ENCODE measurements at regions of chr16 and their contacts with region 1.

Region 1: GRCh38 chr16:10964039-10964890 is 19.9 kb downstream of the CLEC16A start:
- DNase-seq: peak; percentile 86
- ATAC-seq: peak; percentile 70
- H3K4me3 Mint-ChIP-seq: peak overlapping the region; percentile 42
- H3K27ac Mint-ChIP-seq: peak overlapping the region; percentile 83
- H3K4me1 Mint-ChIP-seq: peaks cover 69% of the 10 kb centered on the region
- H3K27me3 Mint-ChIP-seq: no peaks in the 10 kb centered on the region

Region 2: GRCh38 chr16:10944249-10945064 is 19.8 kb before region 1 on chr16 and contains the start of gene CLEC16A:
- CTCF ChIA-PET with region 1: interaction called, 124 read pairs
- POLR2A ChIA-PET with region 1: interaction called, 3 read pairs
- DNase-seq: peak; percentile 96
- ATAC-seq: peak; percentile 72
- H3K4me3 Mint-ChIP-seq: peak within 1 kb of the TSS; percentile 79
- H3K27ac Mint-ChIP-seq: peak within 1 kb of the TSS; percentile 66
- H3K4me1 Mint-ChIP-seq: peaks cover 67% of the 10 kb centered on the region
- H3K27me3 Mint-ChIP-seq: no peaks in the 10 kb centered on the region
- total RNA-seq, gene CLEC16A: 32.8 to 38.5 TPM

Region 3: DNA sequence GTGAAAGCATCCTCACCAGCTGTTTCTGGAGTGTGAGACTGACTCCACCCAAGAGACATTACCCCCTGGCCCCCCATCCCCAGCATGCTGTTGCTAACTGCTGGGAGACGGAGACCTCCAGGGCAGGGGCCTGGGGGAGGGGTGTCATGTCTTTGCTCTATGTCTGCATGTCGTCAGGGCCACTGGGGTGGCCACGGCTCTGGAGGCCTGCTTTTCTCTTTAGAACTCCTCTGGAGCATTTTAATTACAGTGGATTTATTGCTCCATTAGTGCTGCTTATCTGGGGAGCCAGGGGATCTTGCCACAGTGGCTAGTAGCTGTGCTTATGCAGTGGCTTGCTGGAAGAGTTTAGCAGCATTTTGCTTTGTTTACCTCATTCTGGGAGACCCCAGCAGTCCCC is 12.4 kb after region 1 on chr16:
- CTCF ChIA-PET with region 1: interaction called, 38 read pairs
- POLR2A ChIA-PET with region 1: no interaction called
- DNase-seq: no peak
- ATAC-seq: no peak
- H3K4me3 Mint-ChIP-seq: no peak overlapping the region
- H3K27ac Mint-ChIP-seq: no peak overlapping the region
- H3K4me1 Mint-ChIP-seq: peaks cover 81% of the 10 kb centered on the region
- H3K27me3 Mint-ChIP-seq: no peaks in the 10 kb centered on the region

Region 4: GRCh38 chr16:11224096-11224893 is 260.0 kb after region 1 on chr16:
- CTCF ChIA-PET with region 1: interaction called, 17 read pairs
- POLR2A ChIA-PET with region 1: no interaction called
- DNase-seq: peak; percentile 90
- ATAC-seq: peak; percentile 77
- H3K4me3 Mint-ChIP-seq: peak overlapping the region; percentile 80
- H3K27ac Mint-ChIP-seq: peak overlapping the region; percentile 99
- H3K4me1 Mint-ChIP-seq: peaks cover 82% of the 10 kb centered on the region
- H3K27me3 Mint-ChIP-seq: no peaks in the 10 kb centered on the region

Region 5: GRCh38 chr16:11356573-11357331 is 392.5 kb after region 1 on chr16:
- CTCF ChIA-PET with region 1: interaction called, 24 read pairs
- POLR2A ChIA-PET with region 1: no interaction called
- DNase-seq: peak; percentile 68
- ATAC-seq: no peak
- H3K4me3 Mint-ChIP-seq: peak overlapping the region; percentile 76
- H3K27ac Mint-ChIP-seq: peak overlapping the region; percentile 65
- H3K4me1 Mint-ChIP-seq: peaks cover 91% of the 10 kb centered on the region
- H3K27me3 Mint-ChIP-seq: peaks cover 5% of the 10 kb centered on the region

Region 6: DNA sequence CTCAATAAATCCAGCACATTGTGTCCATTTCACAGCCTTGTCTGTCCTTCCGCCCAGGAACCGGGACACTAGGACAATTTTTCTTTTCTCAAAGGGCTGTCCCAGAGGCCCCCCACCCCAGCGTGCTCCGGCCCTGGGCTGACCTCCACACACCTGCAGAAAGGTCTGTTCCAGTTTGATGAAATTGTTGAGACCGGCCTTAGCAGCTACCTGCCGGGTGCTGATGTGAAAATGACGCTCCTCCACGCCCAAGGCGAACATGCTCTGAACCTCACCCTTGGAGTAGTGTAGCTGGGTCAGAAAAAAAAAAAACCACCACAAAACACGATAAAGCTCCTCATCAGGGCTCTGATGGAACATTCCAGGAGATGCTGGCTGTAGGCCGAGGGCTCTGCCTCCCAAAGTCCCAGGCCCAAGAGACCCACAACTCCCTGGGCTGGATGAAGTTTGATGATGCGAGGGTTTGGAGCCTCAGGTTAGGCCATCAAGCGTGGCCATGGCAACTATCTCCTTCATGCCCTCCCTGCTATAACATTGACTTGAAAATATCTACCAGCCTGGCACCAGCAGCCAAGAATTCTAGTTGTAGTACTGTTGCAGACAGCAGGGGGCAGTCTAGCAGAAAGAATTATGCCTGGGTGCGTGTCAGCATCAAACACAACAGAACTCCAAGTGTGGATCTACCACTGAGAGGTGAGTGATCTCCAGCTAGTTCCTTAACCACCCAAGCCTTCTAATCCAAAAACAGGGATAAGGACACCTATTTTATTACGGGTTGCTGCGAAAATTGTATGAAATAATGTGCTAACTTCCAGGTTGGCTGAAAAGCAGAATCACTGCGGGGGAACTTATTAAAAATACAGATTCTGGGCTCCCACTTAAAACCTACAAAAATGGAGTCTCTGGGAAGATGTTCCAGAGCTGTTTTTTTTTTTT is 443.1 kb after region 1 on chr16:
- CTCF ChIA-PET with region 1: interaction called, 60 read pairs
- POLR2A ChIA-PET with region 1: no interaction called
- DNase-seq: peak; percentile 77
- ATAC-seq: peak; percentile 62
- H3K4me3 Mint-ChIP-seq: no peak overlapping the region
- H3K27ac Mint-ChIP-seq: no peak overlapping the region
- H3K4me1 Mint-ChIP-seq: peaks cover 2% of the 10 kb centered on the region
- H3K27me3 Mint-ChIP-seq: no peaks in the 10 kb centered on the region

Measured in activated CD8-positive, alpha-beta T cell treated with anti-CD3 and anti-CD28 coated beads, Interleukin-2, amount 10 ng/mL, durations not matched to agents 7 days and 5 days (primary cell).